Posterior vena cava (tissue), 2 donors: ENCODE measurements at regions of chr2 and their contacts with region 1.

Region 1: DNA sequence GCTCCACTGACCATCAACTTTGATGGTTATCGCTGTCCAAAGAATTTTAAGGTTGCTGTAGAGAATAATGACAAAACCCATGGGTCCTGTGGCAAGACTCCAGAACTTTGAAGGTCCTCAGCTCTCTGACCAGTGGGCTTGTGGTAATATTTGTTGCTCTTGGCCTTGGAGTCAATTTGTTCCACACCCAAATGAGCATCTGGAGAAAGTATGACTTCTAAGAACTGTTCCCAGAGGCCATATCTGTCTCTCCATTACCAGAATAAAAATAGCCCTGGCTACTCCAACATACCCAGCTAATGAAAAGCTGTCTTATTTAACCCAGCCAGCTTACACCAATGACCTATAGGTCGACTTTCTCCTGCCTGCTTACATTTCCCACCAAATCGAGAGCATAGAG is 466.4 kb downstream of the MEIS1 start:
- DNase-seq: no peak

Region 2: GRCh38 chr2:68190991-68191731 is 1289.8 kb after region 1 on chr2:
- intact Hi-C with region 1: loop called in 1 of 2 experiments (anchors 5 kb)
- DNase-seq: no peak